ENCODE measurements at regions of chr1 and their contacts with region 1.

Region 1: DNA sequence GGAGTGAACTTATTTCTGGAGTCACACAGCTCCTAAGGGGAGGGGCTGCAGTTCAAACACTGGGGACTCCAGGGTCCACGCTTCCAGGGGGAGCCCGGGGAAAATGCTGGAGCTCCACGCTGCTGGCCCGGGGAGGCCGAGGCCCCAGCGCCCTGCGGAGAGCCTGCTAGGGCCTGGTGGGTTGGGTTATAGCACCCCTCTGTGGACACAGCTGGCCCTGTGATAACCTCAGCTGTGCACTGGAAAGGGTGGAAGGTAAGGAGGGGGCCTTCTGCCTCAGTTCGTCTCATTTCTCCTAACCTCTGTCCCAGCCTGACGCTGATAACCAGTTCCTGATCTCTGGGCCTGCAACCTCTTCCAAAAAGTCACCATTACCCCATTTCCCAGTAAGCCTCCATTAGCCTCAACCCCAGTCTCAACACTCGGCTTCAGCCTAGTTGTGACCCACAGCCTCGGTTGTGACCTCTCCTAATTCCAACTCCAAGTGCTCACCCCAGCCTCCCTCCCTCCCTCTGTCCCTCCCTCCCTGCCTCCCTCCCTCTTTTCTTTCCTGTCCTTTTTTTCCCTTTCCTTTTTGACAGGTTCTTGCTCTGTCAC is 7.1 kb downstream of the NBL1 start:
- DNase-seq: peak; percentile 85

Region 2: DNA sequence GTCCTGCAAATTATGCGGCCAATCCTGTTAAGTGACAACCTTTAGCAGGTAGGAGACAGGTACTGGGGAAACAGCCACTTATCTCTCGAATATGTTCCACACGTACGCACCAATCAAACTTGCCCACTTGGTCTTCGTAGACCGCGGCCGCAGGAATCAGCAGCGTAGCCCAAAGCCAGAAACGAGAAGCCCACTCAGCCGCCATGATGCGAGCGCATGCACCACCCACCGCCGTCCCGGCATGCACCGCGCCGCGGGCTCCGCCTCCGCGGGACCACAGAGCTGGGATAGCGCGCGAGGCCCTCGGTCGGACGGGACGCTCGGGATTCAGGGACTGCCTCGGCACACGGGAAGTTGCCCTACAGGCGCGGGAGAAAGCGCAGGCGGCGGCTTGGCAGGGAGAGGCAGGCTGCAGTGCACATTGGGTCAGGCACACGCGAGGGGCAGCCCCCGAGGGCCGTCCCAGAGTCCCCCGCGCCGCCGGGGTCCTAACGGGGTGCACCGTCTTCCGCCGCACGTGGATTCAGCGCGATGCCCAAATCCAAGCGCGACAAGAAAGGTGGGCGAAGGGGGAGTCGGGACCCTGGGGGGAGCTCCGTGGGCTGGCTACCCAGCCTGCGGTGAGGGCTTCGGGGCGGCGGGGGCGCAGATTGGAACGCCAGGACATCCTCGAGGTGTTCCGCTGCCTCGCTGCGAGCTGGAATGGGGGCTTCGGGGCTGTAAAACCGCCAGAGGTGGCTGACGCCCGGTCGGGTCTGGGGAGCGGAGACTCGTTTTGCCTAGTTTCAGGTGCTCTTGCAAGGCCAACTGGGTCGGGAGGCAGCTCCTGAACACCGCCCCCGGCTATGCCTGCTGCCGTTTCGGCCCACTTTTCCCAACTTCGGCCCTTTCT is 399.7 kb before region 1 on chr1 and contains the starts of genes EMC1 and MRTO4:
- intact Hi-C with region 1: loop called in 1 of 2 experiments (anchors 10 kb)
- DNase-seq: peak; percentile 96
- total RNA-seq, gene EMC1: 31.8 to 32.0 TPM
- total RNA-seq, gene MRTO4: 20.3 to 24.3 TPM

Region 3: GRCh38 chr1:19398309-19398760 is 252.9 kb before region 1 on chr1:
- intact Hi-C with region 1: loop called (anchors 5 kb)
- DNase-seq: peak; percentile 87

Region 4: GRCh38 chr1:19529664-19530063 is 121.6 kb before region 1 on chr1:
- intact Hi-C with region 1: no loop called
- DNase-seq: no peak

Region 5: DNA sequence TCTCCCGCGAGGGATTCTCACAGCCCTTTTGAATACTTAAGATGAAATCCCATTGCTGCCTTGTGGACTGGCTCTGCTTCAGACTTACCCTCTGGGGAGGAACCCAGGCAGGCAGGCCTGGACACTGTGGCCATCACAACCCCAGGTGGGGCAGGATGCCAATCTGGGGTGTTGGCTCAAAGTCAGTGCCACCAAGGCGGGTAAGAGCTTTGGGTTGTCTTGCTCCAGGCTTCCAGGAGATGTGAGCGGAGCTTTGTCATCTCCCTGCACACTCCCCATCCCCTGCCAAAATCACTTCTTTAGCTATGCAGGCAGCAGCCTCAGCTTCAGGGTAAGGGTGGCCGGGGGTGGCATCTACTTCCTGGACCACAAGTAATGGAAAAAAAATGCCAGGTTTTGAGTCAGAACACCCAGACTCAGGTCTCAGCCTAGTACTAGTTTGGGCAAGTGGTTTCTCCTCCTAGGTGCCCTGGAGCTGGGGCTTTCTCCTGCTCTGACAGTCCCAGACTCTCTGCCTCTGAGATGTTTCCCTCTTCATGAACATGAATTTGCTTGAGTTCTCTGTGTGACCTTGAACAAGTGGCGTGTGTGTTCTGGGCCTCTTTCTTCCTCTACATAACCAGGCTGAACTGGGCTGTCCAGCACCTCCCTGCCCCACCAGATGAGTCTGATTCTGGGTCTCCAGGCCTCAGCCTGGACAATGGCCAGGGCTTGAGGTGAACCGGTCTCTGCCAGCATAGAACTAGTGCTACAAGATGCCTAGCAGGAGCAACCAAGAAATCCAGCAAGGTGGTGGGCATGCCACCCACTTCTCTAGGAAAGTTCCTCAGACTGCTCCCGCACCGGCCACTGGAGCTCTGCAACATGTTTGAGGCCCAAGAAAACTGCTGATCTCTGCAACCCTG is 704.8 kb after region 1 on chr1:
- intact Hi-C with region 1: no loop called
- DNase-seq: peak; percentile 54

Measured in posterior vena cava (tissue), 2 donors.